Left ventricle myocardium inferior (tissue), 1 donor: ENCODE measurements at regions of chr1 and their contacts with region 1.

Region 1: GRCh38 chr1:110460253-110461220 is 9.6 kb downstream of the PROK1 start:
- DNase-seq: peak; percentile 59
- H3K4me3 ChIP-seq: no peak overlapping the region
- H3K27ac ChIP-seq: no peak overlapping the region
- H3K4me1 ChIP-seq: peaks cover 3% of the 10 kb centered on the region
- H3K27me3 ChIP-seq: peaks cover 6% of the 10 kb centered on the region
- CTCF ChIP-seq: peak; percentile 97

Region 2: DNA sequence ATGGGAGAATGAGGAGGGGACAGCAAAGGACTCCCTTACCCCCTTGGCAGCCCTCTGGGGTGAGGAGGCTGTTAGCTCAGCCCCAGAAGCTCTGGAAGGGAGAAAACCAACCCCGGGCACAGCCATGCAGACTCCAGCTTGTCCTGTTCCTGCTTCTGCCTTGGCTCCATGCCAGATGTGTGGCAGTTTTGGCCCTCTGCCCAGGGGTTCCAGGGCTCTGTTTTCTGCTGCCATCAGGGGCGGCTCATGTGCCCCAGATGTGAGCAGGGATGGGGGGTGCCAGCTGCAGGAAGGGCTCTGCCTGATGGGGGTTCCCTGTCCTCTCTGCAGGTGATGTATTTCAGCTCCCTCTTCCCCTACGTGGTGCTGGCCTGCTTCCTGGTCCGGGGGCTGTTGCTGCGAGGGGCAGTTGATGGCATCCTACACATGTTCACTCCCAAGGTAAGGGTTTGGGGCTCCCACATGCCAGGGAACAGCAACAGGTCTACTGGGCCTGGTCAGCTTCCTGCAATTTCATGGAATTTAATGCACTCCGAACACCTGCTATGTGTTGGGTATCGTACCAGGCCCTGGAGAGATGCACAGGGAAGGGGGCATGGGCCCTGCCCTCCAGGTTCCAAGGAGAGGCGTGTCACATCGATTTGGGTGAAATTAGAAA is 284.1 kb before region 1 on chr1:
- intact Hi-C with region 1: no loop called
- DNase-seq: peak; percentile 59
- H3K4me3 ChIP-seq: no peak overlapping the region
- H3K27ac ChIP-seq: no peak overlapping the region
- H3K4me1 ChIP-seq: peaks cover 5% of the 10 kb centered on the region
- H3K27me3 ChIP-seq: peaks cover 18% of the 10 kb centered on the region
- CTCF ChIP-seq: no peak

Region 3: DNA sequence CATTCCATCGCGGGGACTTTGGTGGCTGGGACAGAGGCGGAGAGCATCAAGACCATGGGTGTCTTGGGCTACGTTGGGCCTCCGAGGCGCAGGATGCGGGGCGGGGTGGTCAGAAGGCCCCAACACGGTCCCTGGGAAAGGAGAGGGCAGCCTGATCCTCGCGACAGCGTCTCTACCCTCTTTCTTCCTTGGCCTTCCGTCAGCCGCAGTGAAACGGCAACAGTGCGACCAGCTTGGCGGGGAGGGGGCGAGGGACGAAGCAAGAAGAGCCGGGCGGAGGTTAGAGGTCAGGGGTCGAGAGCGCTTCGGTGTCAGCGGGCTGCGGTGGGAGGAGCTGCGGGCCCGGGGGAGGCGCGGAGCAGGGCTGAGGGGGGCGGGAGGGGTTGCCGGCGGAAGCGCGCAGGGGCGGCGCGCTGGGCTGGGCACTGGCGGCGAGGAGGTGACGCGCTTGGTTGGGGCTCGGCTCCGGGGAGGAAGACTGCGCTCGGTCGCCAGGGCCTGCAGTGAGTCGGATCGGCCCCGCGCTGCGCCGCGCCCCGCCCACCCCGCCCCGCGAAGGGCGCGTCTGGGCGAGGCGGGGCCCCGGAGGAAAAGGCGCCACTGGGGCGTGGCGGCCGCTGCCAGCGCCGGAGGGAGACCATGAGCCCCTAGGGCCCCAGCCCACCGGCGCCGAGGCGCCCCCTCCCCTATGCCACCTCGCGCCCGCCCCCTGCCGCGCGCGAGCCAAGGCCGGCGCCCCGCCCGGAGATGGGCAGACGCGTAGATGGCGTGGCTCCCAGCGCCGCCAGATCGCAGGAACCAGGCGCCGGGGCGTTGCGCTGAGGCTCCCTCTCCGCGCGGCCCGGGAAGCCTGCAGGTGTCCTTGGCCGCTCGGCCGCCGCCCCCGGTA is 250.6 kb before region 1 on chr1 and contains the start of gene KCNC4:
- intact Hi-C with region 1: loop called (anchors 5 kb)
- DNase-seq: peak; percentile 92
- H3K4me3 ChIP-seq: peak within 1 kb of the TSS; percentile 82
- H3K27ac ChIP-seq: peak within 1 kb of the TSS; percentile 88
- H3K4me1 ChIP-seq: peaks cover 55% of the 10 kb centered on the region
- H3K27me3 ChIP-seq: peaks cover 14% of the 10 kb centered on the region
- CTCF ChIP-seq: peak; percentile 19
- total RNA-seq, gene KCNC4: 6.1 TPM

Region 4: GRCh38 chr1:110262846-110263631 is 197.5 kb before region 1 on chr1:
- intact Hi-C with region 1: no loop called
- DNase-seq: no peak
- H3K4me3 ChIP-seq: no peak overlapping the region
- H3K27ac ChIP-seq: peak overlapping the region; percentile 63
- H3K4me1 ChIP-seq: peaks cover 14% of the 10 kb centered on the region
- H3K27me3 ChIP-seq: no peaks in the 10 kb centered on the region
- CTCF ChIP-seq: no peak

Region 5: DNA sequence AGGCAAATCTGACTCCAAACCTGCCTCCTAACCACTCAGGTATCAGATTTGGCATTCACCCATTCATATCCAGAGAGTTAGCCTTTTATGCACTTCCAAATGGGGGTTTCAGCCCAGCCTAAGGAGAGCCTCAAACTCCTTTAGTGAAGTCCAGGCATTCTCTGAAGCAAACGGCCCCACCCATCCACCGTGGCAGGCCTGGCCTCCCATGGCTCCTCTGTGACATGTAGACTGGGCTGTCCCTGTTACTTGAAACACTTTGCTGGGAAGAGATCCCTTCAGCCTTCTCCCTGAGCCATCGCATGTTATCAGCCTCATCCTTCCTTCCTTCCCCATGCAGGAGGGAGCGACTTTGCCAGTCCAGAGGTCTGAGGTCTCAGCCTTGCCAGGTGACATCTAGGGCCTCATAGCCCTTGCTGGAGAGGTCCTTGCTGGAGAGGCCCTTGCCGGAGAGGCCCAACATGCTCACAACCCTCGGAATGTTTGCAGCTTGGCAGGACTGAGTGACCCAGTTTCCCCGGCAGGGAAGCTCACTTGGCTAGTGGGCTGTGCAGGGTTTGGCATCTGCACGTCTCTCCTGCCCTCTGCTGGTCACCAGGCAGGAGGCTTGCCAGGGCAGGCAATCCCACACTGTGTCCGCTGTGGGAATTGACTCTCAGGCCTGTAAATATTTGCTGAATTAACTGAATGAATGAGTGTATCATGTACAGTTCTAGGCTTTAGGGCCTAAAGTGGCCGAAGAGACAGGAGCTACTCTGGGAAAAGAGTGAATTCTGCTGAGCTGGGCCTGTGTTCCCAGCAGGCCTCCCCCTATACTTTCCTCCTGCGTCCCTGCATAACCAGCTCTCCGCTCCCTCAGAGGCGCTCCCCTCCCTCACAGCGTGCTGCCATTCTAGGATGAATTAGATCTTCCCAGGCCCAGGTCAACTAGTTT is 148.1 kb before region 1 on chr1:
- intact Hi-C with region 1: loop called (anchors 10 kb)
- DNase-seq: peak; percentile 80
- H3K4me3 ChIP-seq: no peak overlapping the region
- H3K27ac ChIP-seq: no peak overlapping the region
- H3K4me1 ChIP-seq: peaks cover 51% of the 10 kb centered on the region
- H3K27me3 ChIP-seq: no peaks in the 10 kb centered on the region
- CTCF ChIP-seq: peak; percentile 96

Region 6: DNA sequence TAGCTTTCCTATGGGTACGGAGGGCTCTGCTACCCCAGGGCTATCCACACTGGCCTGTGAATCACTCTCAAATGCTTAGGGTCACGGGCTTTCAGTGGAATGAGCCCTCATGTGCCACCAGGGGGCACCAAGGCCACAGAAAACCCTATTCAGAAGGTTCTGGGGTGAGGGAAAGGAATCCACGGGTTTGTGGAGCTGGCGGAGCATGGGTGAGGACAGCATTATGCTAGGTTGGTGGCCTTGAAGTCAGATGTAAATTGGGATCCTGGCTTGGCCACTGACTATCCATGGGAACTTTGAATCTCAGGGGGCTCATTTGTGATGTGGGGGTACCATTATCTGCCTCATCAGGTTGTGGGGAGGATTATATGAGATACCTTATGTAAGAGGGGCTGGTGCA is 48.0 kb before region 1 on chr1:
- intact Hi-C with region 1: loop called (anchors 2 kb)
- DNase-seq: peak; percentile 52
- H3K4me3 ChIP-seq: no peak overlapping the region
- H3K27ac ChIP-seq: no peak overlapping the region
- H3K4me1 ChIP-seq: peaks cover 29% of the 10 kb centered on the region
- H3K27me3 ChIP-seq: no peaks in the 10 kb centered on the region
- CTCF ChIP-seq: peak; percentile 80